BJ (cell line): ENCODE measurements at regions of chr2 and their contacts with region 1.

Region 1: DNA sequence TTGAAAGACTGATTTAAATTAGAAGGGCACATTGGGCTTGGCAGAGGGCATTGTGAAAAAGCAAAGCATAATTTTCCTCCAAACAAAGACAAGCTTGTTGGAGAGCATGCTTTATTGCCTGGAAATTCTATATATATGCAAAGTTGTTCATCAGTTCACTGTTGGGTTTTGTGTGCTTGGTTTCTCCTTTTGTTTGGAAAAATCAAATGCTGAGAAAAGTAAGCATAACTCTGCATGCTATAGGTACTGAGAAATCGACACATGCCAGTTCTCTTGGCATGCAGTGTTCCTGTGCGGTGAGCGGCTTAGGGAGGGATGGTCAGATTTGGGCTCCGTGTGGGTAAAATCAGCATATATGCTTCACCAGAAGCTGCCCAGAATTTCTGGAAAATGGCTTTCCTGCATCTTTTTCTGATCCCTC is 161.0 kb downstream of the RAPGEF4 start:
- DNase-seq: no peak
- H3K4me3 ChIP-seq: no peak overlapping the region
- H3K27me3 ChIP-seq: peaks cover 13% of the 10 kb centered on the region
- CTCF ChIP-seq: no peak

Region 2: DNA sequence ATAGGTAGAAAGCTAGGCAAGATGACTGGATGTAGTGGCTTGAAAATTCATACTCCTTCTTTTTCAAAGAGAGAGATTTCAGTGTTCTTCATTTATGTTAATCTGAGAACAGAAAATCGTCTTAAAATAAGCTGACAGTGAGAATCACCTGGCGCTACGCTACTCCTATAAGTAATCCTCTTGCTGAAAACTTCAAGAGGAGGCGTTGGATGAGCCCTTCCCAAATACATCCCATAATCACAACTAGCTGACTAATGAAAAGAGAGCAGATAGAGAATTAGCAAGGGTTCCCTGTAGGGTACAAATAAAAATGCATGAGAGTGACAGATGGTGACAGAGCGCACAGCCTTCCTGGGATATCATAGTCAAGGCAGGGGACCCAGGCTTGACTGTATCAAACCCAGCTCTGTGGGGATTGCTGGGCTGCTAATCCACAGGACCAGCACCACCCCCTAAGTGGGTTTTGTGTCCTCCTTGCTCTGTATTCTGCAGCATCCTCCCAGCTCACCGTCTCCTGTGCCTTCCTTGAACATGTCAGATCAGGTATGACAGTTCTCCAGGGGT is 788.3 kb after region 1 on chr2:
- CTCF ChIA-PET with region 1: no interaction called
- POLR2A ChIA-PET with region 1: interaction called, 27 read pairs
- DNase-seq: no peak
- H3K4me3 ChIP-seq: no peak overlapping the region
- H3K27me3 ChIP-seq: no peaks in the 10 kb centered on the region; the same call in 1 of the 2 replicates
- CTCF ChIP-seq: no peak